Activated CD4-positive, alpha-beta memory T cell treated with anti-CD3 and anti-CD28 coated beads for 36 hours (primary cell): ENCODE measurements at regions of chr1 and their contacts with region 1.

Region 1: DNA sequence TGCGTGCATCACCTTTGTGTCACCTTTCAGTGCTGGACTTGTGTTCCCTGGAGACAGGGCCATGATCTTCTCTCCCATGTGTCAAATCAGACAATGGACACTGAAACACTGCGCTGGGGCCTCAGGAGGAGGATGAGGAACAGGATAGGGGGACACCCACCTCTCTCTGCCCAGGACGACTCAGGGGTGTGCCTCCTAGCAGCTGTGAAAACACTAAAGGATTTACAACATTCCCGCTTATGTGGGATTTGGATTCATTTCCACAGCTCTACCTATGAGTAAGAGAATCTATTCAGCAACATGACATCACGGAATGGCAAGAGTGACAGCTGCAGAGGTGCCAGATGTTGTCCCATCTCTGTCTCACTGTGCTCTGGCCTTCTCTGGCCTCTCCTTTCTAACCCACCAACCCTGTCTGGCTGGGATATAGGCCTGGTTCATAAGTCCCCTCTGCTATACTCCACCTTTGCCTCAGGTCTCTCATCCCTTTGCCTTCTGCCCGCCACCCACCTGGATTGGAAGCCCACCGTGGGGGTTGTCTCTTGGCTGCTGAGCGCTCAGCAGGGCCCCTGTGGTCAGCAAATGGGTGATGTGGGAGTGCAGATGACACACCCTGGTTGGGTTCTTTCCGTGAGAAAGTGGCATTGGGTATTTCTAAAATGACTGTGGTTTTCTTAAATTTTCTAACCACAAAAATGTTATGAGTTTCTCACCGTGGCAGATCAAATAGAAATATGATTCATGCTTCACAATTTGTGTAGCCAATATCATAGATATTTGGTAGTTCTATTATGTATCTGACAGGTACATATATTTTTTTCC is 47.1 kb upstream of the TLR5 start:
- DNase-seq: peak; percentile 79
- H3K4me3 Mint-ChIP-seq: peak overlapping the region; percentile 40
- H3K27ac Mint-ChIP-seq: peak overlapping the region; percentile 59
- H3K4me1 Mint-ChIP-seq: peaks cover 23% of the 10 kb centered on the region
- H3K27me3 Mint-ChIP-seq: peaks cover 11% of the 10 kb centered on the region

Region 2: DNA sequence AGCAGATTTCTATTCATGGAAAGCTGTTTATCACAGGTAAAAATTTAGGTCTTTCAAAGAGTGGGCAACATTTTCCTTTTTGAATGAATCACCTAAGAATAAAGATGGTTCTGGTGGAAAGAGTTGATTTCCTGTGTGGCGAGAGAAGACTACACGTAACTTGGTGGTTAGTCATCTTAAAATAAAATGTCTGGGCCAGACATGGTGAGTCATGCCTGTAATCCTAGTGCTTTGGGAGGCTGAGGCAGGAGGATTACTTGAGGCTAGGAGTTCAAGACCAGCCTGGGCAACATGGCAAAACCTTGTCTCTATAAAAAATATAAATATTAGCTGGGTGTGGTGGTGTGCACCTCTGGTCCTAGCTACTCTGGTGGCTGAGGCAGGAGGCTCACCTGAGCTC is 309.5 kb before region 1 on chr1:
- CTCF ChIA-PET with region 1: no interaction called
- POLR2A ChIA-PET with region 1: no interaction called
- intact Hi-C with region 1: loop called (anchors 1 kb)
- DNase-seq: peak; percentile 38
- H3K4me3 Mint-ChIP-seq: no peak overlapping the region
- H3K27ac Mint-ChIP-seq: no peak overlapping the region
- H3K4me1 Mint-ChIP-seq: peaks cover 11% of the 10 kb centered on the region
- H3K27me3 Mint-ChIP-seq: no peaks in the 10 kb centered on the region

Region 3: DNA sequence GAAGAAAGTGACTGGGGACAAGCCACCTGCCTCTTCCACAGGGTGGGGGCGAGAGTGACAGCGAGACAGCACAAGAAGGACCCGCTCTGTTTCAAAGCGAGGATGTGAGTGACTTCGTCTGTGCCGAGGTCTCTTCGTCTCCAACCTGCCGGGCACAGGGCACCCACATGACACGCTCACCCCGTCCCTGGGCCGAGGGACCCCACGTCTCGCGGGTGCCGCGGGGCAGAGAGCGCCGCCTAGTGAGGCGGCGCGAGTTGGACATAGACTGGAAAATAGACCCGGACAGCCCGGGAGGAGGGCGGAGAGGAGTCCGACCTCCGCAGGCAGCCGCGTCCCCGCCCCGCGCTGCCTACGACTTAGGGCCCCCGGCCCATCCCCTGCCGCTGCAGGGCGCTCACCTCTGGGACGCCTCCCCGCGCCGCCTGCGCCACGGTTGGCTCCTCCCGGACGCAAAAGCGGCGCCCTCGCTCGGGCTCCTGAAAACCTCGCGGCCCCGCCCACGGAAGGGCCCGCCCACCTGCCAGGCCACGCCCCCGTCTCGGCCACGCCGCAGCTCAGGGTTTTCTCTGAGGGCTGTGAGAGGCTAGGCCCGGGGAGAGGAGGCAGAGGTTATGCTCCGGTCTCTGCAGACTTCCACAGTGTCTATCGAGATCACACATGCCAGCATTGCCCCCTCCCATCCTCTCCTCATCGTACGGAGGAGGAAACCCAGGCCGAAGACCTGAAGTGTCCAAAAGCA is 47.1 kb before region 1 on chr1 and contains the start of gene TLR5:
- CTCF ChIA-PET with region 1: no interaction called
- POLR2A ChIA-PET with region 1: no interaction called
- intact Hi-C with region 1: loop called (anchors 2 kb)
- DNase-seq: peak; percentile 93
- H3K4me3 Mint-ChIP-seq: peak within 1 kb of the TSS; percentile 63
- H3K27ac Mint-ChIP-seq: peak within 1 kb of the TSS; percentile 9
- H3K4me1 Mint-ChIP-seq: peaks cover 19% of the 10 kb centered on the region
- H3K27me3 Mint-ChIP-seq: no peaks in the 10 kb centered on the region
- total RNA-seq, gene TLR5: 0.29 to 0.48 TPM

Region 4: DNA sequence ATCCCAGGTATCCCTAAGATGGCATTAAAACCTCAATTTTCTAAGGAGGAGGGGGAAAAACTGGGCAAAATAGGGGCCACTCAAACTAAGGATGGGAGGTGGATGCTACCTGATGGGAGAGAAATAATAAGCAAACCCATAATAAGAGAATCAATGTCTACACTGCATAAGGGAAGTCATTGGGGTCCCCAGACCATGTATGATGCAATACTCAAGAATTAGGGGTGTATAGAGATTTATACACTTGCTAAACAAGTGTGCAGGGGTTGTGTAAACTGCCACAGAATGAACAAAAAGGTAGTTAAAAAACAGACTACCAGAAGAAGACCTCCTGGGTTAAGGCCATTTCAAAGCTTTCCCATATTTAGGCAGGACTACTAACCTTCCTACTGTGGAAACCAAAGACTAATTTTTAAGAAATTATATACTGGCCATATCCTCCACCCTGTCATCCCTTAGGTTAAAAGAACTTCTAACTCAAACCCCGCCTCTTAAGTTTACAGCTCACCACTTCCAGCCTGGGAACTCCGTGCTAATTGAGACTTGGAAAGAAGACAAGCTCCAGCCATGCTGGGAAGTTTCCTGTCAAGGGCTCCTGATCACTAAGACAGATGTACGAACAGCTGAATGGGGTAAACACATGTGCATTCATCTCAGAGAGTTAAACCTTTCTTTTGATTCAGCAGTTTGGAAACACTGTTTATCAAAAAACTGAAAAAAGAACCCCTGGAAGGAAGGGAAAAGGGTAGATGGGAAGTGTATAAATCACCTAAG is 17.4 kb after region 1 on chr1:
- CTCF ChIA-PET with region 1: no interaction called
- POLR2A ChIA-PET with region 1: no interaction called
- intact Hi-C with region 1: no loop called
- DNase-seq: no peak
- H3K4me3 Mint-ChIP-seq: no peak overlapping the region
- H3K27ac Mint-ChIP-seq: no peak overlapping the region
- H3K4me1 Mint-ChIP-seq: no peaks in the 10 kb centered on the region
- H3K27me3 Mint-ChIP-seq: peaks cover 4% of the 10 kb centered on the region

Region 5: DNA sequence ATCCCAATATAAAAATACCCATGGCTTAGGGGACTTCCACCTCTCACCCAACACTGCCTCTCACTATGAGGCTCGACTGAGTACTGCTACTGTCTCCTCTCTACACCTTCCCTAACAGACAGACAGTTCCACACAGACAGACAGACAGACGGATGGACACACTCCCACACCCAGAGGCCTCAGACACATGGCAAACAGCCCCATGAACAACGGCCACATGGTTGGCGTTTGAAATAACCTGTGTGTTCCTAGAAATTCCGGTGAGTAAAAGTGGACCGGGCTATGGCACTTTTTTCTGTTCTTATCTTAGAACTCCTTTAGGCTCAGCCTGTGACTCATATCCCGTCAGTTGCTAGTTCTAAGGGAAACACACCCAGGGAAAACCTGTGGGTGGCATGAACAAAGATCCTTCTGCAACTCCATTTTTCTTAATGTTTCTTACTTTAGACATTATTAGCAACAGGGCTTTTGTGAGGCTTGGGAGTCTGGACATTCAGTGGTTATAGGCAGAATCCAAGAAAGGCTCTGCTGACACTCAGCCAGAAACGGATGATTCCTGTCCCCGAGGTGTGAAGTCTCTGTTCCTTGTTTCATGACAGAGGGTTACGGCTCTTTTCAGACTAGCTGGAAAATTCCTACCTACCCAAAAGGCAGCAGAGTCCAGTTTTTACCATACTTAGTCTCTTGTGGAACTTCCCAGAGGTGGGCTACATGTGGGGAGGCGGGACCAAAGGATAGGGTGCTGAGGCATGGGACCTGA is 43.5 kb after region 1 on chr1:
- CTCF ChIA-PET with region 1: interaction called, 3 read pairs
- POLR2A ChIA-PET with region 1: interaction called, 3 read pairs
- intact Hi-C with region 1: loop called (anchors 1 kb)
- DNase-seq: peak; percentile 40
- H3K4me3 Mint-ChIP-seq: no peak overlapping the region
- H3K27ac Mint-ChIP-seq: peak overlapping the region; percentile 35
- H3K4me1 Mint-ChIP-seq: peaks cover 55% of the 10 kb centered on the region
- H3K27me3 Mint-ChIP-seq: no peaks in the 10 kb centered on the region

Region 6: GRCh38 chr1:223244366-223245103 is 54.4 kb after region 1 on chr1:
- CTCF ChIA-PET with region 1: no interaction called
- POLR2A ChIA-PET with region 1: no interaction called
- intact Hi-C with region 1: loop called (anchors 1 kb)
- DNase-seq: peak; percentile 52
- H3K4me3 Mint-ChIP-seq: no peak overlapping the region
- H3K27ac Mint-ChIP-seq: peak overlapping the region; percentile 59
- H3K4me1 Mint-ChIP-seq: peaks cover 31% of the 10 kb centered on the region
- H3K27me3 Mint-ChIP-seq: no peaks in the 10 kb centered on the region